ENCODE measurements at regions of chr6 and their contacts with region 1.

Region 1: GRCh38 chr6:70107852-70108629 is 194.8 kb downstream of the COL9A1 start:
- DNase-seq: peak; percentile 8
- H3K4me3 ChIP-seq: no peak overlapping the region
- H3K27ac ChIP-seq: no peak overlapping the region
- H3K4me1 ChIP-seq: no peaks in the 10 kb centered on the region
- H3K27me3 ChIP-seq: no peaks in the 10 kb centered on the region
- CTCF ChIP-seq: peak; percentile 66 to 69

Region 2: DNA sequence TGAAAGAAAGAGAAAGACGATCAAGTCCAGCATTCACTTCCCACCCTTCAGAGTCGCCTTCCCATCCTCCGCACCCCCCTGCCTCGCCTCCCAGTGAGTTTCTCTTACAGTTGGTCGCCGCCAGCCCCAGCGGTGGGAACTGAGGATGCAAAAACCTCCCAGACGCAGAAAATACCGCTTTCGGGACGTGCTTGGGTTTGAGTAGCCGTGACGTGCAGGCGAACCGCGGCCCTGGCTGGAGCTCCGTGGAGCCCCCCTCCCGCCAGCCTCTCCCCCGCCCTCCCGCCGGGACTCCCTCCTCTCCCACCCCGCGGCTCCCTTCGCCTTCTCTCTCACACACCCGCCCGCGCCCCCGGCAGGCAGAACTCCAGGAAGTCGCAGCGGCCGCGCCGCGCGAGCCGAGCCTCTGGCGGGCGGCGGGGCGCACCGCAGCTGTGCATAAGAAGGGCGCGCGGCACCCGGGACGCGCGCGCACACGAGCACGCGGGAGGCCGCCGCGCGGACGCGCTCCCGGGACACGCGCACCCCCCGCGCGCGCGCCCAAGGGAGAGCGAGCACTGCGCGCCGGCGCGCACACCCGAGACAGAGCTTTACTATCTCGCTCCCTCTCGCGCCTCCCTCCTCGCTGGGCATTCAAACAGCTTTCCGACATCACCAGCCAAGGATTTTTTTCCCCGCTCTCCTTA is 1473.2 kb before region 1 on chr6 and contains the start of gene ADGRB3:
- CTCF ChIA-PET with region 1: no interaction called
- dilution Hi-C with region 1: no loop called
- in situ Hi-C with region 1: loop called in 1 of 2 experiments (anchors 25 kb)
- intact Hi-C with region 1: loop called (anchors 2 kb)
- DNase-seq: peak; percentile 29
- H3K4me3 ChIP-seq: peak within 1 kb of the TSS; percentile 29 to 47 (median 38)
- H3K27ac ChIP-seq: no peak within 1 kb of the TSS
- H3K4me1 ChIP-seq: no peaks in the 10 kb centered on the region
- H3K27me3 ChIP-seq: peaks cover 13% of the 10 kb centered on the region
- CTCF ChIP-seq: no peak
- total RNA-seq, gene ADGRB3: not detected

Region 3: DNA sequence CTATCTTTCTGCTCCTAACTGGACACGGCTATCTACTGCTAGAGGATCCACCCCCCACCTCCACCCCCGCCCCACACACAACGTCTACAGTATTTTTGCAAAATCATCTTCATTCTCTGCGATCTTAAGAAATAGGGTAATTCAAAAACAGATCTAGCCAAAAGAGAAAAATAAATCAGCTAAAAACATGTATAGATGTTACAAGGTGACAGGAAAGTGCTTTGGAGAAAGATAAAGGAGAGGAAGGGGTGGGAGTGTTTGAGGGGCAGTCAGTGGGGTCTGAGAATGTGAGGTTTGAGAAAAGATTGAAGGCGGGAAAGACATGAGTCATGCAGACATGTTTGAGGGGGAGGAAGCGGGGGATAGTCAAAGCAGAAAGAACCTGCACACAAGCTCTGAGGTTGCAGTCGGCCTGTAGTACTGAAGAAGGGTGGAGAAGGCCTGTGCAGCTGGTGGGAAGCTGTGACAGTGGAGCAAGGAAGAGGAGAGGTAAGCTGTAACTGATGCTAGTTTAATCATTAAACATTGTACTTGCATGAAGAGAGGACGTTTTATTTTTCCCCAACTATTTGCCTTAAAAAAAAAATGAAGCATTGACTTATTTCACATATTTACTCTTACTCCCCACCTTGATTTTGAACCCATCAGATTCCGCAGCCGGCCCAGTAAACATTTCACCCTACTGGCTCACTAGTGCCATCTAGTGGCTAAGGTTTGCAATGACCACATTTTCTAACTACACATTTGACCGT is 1140.3 kb before region 1 on chr6:
- CTCF ChIA-PET with region 1: no interaction called
- dilution Hi-C with region 1: no loop called
- in situ Hi-C with region 1: no loop called
- intact Hi-C with region 1: loop called (anchors 10 kb)
- DNase-seq: peak; percentile 17
- H3K4me3 ChIP-seq: no peak overlapping the region
- H3K27ac ChIP-seq: no peak overlapping the region
- H3K4me1 ChIP-seq: no peaks in the 10 kb centered on the region
- H3K27me3 ChIP-seq: no peaks in the 10 kb centered on the region
- CTCF ChIP-seq: peak; percentile 87 to 88

Region 4: DNA sequence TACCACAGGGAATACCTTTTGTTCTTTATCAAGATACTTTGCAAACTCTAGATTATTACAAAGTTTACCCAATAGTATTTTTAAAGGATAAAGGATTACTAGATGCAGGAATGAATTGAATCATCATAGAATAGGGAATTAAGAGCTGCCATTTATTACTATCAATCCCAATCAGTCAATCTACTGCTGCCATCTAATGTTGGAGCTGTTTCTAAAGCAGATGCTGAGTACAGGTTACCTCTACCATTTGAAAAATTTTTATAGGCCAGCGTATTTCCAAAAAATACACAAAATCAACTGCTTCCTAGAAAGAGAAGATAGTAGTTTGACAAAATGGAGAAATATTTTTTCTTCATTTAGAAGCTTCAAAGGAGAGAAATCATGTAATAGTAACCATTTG is 952.6 kb before region 1 on chr6:
- CTCF ChIA-PET with region 1: no interaction called
- dilution Hi-C with region 1: no loop called
- in situ Hi-C with region 1: no loop called
- intact Hi-C with region 1: no loop called
- DNase-seq: no peak
- H3K4me3 ChIP-seq: no peak overlapping the region
- H3K27ac ChIP-seq: no peak overlapping the region
- H3K4me1 ChIP-seq: no peaks in the 10 kb centered on the region
- H3K27me3 ChIP-seq: no peaks in the 10 kb centered on the region
- CTCF ChIP-seq: peak in 1 of 2 donors; percentile 34

Region 5: GRCh38 chr6:69835414-69836179 is 272.4 kb before region 1 on chr6:
- CTCF ChIA-PET with region 1: interaction called, 8 read pairs
- dilution Hi-C with region 1: no loop called
- in situ Hi-C with region 1: loop called (anchors 10 to 25 kb)
- intact Hi-C with region 1: loop called (anchors 1 kb)
- DNase-seq: peak; percentile 37
- H3K4me3 ChIP-seq: no peak overlapping the region
- H3K27ac ChIP-seq: no peak overlapping the region
- H3K4me1 ChIP-seq: no peaks in the 10 kb centered on the region
- H3K27me3 ChIP-seq: peaks cover 11% of the 10 kb centered on the region
- CTCF ChIP-seq: peak; percentile 85 to 88

Region 6: GRCh38 chr6:70538376-70538775 is 430.3 kb after region 1 on chr6:
- CTCF ChIA-PET with region 1: interaction called, 13 read pairs
- dilution Hi-C with region 1: no loop called
- in situ Hi-C with region 1: no loop called
- intact Hi-C with region 1: no loop called
- DNase-seq: no peak
- H3K4me3 ChIP-seq: no peak overlapping the region
- H3K27ac ChIP-seq: no peak overlapping the region
- H3K4me1 ChIP-seq: no peaks in the 10 kb centered on the region
- H3K27me3 ChIP-seq: no peaks in the 10 kb centered on the region
- CTCF ChIP-seq: no peak